Cardiac septum (tissue), 1 donor: ENCODE measurements at regions of chr7 and their contacts with region 1.

Region 1: GRCh38 chr7:4797858-4798705 is 22.7 kb downstream of the AP5Z1 start:
- DNase-seq: no peak

Region 2: GRCh38 chr7:4765776-4766490 is 32.1 kb before region 1 on chr7:
- intact Hi-C with region 1: no loop called
- DNase-seq: no peak

Region 3: GRCh38 chr7:4883374-4884144 is 85.5 kb after region 1 on chr7 and contains the start of gene RADIL:
- intact Hi-C with region 1: loop called (anchors 2 kb)
- DNase-seq: peak; percentile 91
- total RNA-seq, gene RADIL: 2.5 TPM

Region 4: DNA sequence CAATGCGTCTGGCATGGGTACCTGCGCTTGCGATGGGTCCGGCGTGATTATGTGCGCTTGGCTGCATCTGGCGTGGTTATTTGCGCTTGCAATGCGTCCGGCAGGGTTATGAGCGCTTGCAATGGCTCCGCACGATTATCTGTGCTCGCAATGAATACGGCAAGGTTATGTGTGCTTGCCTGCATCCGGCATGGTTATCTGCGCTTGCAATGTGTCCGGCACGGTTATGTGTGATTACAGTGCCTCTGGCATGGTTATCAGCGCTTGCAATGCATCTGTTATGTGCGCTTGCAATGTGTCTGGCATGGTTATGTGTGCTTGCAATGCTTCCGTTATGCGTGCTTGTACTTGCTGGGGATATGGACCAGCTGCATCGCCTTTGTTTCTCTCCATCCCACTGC is 285.2 kb after region 1 on chr7:
- intact Hi-C with region 1: loop called (anchors 2 kb)
- DNase-seq: peak; percentile 58